K562 (cell line): ENCODE measurements at regions of chr7 and their contacts with region 1.

Region 1: DNA sequence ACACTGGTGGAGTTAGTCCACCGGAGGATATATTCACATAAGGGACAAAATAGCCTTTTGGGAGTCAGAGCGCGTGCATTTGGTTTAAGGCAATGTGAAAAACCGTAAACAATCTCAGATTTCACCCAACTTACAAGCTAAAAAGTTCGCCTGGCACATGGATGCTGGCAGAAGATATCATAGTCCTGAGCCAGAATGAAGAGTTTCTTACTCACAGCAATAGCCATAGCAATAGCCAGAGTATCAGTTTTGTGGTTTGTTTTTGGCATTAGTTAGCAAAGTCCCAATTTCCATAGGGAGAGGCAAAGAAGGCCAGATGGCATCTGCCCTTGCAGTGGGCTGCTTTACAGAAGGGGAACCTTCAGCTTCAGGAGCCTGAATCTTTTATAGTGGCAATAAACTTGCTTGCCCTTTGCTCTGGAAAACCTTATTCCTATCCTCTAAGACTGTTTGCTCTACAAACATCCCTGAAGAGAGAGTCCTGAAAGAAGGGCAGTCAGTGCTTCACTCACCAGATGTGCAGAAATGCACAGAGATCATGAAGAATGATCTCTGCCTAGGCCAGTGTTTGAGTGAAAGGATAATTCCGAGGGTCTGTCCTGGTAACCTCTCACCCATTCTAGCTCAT is 28.7 kb upstream of the RSBN1L start:
- DNase-seq: no peak
- ATAC-seq: no peak
- H3K4me3 ChIP-seq: no peak overlapping the region
- H3K27ac ChIP-seq: no peak overlapping the region
- H3K4me1 ChIP-seq: no peaks in the 10 kb centered on the region
- H3K27me3 ChIP-seq: no peaks in the 10 kb centered on the region
- CTCF ChIP-seq: no peak
- EP300 ChIP-seq: no peak
- POLR2A ChIP-seq: no peak
- RAD21 ChIP-seq: no peak

Region 2: GRCh38 chr7:77933394-77933793 is 265.8 kb after region 1 on chr7:
- CTCF ChIA-PET with region 1: interaction called, 3 read pairs
- POLR2A ChIA-PET with region 1: no interaction called
- in situ Hi-C with region 1: loop called (anchors 5 kb)
- intact Hi-C with region 1: no loop called
- DNase-seq: peak; percentile 46 to 67 (median 56)
- ATAC-seq: peak; percentile 81
- H3K4me3 ChIP-seq: no peak overlapping the region
- H3K27ac ChIP-seq: peak overlapping the region; percentile 35; the same call in 1 of the 3 replicates
- H3K4me1 ChIP-seq: peaks cover 0 to 10% of the 10 kb centered on the region in 2 experiments; a peak in 2 of 5 replicates
- H3K27me3 ChIP-seq: no peaks in the 10 kb centered on the region
- CTCF ChIP-seq: no peak
- EP300 ChIP-seq: peak; percentile 19; the same call in 1 of the 2 replicates
- POLR2A ChIP-seq: no peak
- RAD21 ChIP-seq: 0 out of 4 replicates have a peak, but pooled peaks of 1 of the 2 experiments have one; percentile 7

Region 3: DNA sequence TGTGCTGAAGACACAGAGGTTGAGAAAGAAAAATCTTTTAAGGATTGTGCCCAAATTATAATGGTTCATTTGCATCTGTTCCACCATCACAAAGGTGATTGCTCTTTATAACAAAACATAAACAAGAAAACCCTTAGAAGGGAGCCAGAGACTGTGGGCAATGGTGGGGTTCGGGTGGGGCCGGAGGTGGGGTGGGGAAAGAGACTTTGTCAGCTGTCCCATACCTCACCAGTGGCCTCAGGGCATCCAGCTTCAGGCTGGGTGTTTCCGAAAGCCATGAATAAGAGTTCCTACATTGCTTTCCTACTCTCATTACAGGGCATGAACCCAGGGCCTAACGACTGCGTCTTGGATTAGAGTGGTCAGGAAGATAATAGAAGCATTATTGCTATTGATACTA is 358.9 kb after region 1 on chr7:
- CTCF ChIA-PET with region 1: no interaction called
- POLR2A ChIA-PET with region 1: no interaction called
- in situ Hi-C with region 1: loop called (anchors 10 kb)
- intact Hi-C with region 1: loop called (anchors 5 kb)
- DNase-seq: no peak
- ATAC-seq: no peak
- H3K4me3 ChIP-seq: no peak overlapping the region
- H3K27ac ChIP-seq: no peak overlapping the region
- H3K4me1 ChIP-seq: no peaks in the 10 kb centered on the region
- H3K27me3 ChIP-seq: peaks cover 13 to 31% of the 10 kb centered on the region in 2 experiments; a peak in 4 of 5 replicates
- CTCF ChIP-seq: no peak
- EP300 ChIP-seq: no peak
- POLR2A ChIP-seq: no peak
- RAD21 ChIP-seq: no peak

Region 4: DNA sequence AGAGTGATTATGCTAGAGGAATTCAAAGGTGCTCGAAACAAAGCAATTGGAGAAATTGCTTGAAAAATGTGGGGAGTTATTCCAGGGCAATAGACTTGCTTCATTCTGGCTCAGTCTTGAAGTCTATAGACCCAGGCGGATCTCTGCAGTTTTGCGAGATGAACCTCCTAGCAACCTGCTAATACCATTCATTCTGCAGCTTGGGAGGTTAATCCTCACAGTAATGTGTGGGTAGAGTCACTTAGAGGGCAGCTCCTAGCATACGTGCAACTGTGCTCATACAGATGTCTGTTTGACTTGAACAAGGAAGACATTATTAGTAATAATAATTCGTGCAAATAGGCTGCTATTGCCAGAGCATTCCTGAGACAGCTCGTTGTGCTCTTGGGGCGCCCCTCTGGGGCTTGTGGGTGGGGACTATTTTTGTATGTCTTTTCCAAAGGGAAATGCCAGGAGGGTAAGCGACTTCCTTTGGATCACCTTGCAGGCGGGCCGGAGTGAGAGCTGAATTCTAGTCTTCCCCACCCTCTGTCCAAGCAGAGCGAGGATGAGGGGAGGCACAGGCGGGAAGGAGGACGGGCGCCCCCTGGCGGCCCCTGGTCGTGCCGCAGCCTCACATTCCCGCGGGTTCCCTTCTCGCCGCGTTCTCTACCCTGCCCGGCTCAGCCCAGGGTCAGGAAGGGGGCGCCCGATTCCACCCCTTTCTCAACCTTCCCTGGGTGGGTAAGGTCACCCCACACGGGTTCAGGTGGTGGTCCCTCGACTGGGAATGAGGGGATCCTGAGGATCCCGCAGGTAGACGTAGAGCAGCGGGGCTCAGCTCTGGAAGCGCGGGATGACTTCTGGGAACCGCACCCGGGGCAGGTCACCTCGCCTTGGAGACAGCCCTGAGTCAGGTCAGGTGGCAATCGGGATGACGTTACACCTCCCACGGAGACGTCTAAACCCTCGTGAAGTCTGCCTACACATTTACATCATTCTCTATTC is 372.5 kb after region 1 on chr7:
- CTCF ChIA-PET with region 1: no interaction called
- POLR2A ChIA-PET with region 1: no interaction called
- in situ Hi-C with region 1: loop called (anchors 10 kb)
- intact Hi-C with region 1: no loop called
- DNase-seq: peak; percentile 76 to 85 (median 81)
- ATAC-seq: peak; percentile 99
- H3K4me3 ChIP-seq: no peak overlapping the region
- H3K27ac ChIP-seq: no peak overlapping the region
- H3K4me1 ChIP-seq: peaks cover 0 to 6% of the 10 kb centered on the region in 2 experiments; a peak in 1 of 5 replicates
- H3K27me3 ChIP-seq: peaks cover 19 to 27% of the 10 kb centered on the region in 2 experiments
- CTCF ChIP-seq: peak; percentile 85 to 92 (median 88)
- EP300 ChIP-seq: no peak
- POLR2A ChIP-seq: no peak
- RAD21 ChIP-seq: peak; percentile 88 to 93